ENCODE measurements at regions of chr6 and their contacts with region 1.

Region 1: DNA sequence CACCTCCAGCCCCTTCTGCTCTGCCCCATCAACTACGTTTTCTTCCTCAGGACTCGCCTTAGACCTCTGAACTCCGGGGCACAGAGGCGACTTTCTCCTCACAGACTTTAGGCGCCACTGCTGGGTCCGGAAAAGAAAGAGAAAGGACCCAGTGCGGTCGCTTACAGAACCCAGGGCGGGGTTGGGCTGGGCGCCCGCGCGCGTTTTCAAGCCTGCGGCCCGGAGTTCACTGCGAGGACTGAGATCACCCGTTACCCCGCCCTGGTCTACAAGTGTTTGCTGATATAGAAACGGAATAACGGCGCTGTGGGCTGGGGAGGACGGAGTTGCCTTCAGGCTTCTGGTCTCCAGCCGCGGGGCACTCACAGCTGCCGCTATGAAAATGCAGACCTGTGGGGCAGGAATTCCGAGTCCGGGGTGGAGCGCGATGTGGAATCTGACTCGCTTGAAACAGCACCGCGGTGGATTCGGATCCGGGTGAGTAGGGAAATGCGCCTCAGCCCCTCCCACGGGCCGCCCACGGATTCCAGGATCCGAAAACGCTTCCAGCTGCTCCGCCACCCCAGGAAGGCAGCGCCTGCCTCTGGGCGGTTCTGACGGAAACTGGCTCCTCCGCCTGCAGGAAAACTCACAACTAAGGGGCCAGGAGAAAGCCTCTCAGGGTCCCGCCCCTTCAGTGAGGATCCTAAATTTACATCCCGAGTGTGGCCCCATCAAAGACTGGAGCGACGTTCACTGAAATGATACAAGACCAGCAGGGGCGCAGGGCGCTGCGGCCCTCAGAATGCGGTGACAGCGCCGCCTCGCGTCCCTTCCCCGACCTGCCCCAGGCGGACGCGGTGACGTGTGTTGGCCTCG is 29.4 kb downstream of the HLA-F start:
- DNase-seq: peak; percentile 79
- H3K4me3 Mint-ChIP-seq: peak overlapping the region; percentile 93
- H3K27ac Mint-ChIP-seq: peak overlapping the region; percentile 91
- H3K4me1 Mint-ChIP-seq: peaks cover 65% of the 10 kb centered on the region
- H3K27me3 Mint-ChIP-seq: no peaks in the 10 kb centered on the region

Region 2: GRCh38 chr6:29524444-29525310 is 228.0 kb before region 1 on chr6:
- intact Hi-C with region 1: no loop called
- DNase-seq: no peak
- H3K4me3 Mint-ChIP-seq: no peak overlapping the region
- H3K27ac Mint-ChIP-seq: no peak overlapping the region
- H3K4me1 Mint-ChIP-seq: no peaks in the 10 kb centered on the region
- H3K27me3 Mint-ChIP-seq: peaks cover 17% of the 10 kb centered on the region

Region 3: DNA sequence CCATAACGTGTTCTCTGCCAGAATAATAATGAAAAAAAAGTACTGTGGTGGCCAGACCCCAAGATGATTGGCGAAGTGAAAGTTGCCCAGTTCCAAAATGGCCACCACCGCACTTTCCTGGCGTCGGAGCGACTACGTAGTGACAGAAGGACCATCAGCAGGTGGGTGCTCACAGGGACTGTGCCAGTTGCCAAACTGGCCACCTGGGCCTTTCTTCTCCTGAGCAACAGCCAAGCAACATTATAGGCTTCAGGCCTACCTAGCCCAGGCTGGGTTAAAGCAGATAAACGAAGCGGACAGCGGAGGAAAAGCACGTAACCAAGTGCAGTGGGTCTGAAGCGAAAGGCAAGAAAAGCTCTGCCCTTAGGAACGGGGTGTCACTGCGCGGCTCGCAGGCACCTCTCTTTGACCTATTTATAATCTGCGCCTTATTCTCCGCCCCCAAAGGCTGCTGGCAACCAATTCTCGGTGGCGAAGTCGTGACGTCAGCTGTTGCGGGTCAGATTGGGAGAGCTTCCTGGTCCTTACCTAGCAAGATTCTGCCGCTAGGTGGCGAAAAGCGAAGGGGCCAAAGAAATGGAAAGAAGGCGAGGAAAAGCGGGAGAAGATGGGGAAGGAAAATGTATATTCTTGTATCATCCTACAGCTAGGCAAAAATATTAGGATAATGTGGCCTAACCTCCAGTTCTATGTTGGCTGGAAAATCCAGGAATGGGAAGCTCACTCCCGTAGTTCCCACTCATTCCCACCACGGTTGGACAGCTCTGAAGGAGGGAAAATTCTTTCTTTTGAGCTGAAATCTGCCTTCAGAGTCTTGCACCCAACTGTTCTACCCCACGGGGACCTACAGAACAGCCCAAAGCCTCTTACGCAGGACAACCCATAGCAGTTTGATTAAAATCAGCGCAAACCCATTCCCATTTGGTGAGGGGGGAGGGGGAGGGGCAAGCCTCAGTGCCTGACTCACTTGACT is 102.7 kb before region 1 on chr6:
- intact Hi-C with region 1: loop called (anchors 1 kb)
- DNase-seq: peak; percentile 95
- H3K4me3 Mint-ChIP-seq: peak overlapping the region; percentile 89
- H3K27ac Mint-ChIP-seq: peak overlapping the region; percentile 98
- H3K4me1 Mint-ChIP-seq: peaks cover 20% of the 10 kb centered on the region
- H3K27me3 Mint-ChIP-seq: peaks cover 5% of the 10 kb centered on the region

Region 4: GRCh38 chr6:29737707-29738630 is 14.7 kb before region 1 on chr6:
- intact Hi-C with region 1: loop called (anchors 1 kb)
- DNase-seq: peak; percentile 63
- H3K4me3 Mint-ChIP-seq: no peak overlapping the region
- H3K27ac Mint-ChIP-seq: no peak overlapping the region
- H3K4me1 Mint-ChIP-seq: peaks cover 12% of the 10 kb centered on the region
- H3K27me3 Mint-ChIP-seq: no peaks in the 10 kb centered on the region

Region 5: GRCh38 chr6:29792123-29793035 is 39.7 kb after region 1 on chr6:
- intact Hi-C with region 1: loop called (anchors 2 kb)
- DNase-seq: peak; percentile 69
- H3K4me3 Mint-ChIP-seq: peak overlapping the region; percentile 86
- H3K27ac Mint-ChIP-seq: peak overlapping the region; percentile 64
- H3K4me1 Mint-ChIP-seq: peaks cover 13% of the 10 kb centered on the region
- H3K27me3 Mint-ChIP-seq: peaks cover 49% of the 10 kb centered on the region

Region 6: DNA sequence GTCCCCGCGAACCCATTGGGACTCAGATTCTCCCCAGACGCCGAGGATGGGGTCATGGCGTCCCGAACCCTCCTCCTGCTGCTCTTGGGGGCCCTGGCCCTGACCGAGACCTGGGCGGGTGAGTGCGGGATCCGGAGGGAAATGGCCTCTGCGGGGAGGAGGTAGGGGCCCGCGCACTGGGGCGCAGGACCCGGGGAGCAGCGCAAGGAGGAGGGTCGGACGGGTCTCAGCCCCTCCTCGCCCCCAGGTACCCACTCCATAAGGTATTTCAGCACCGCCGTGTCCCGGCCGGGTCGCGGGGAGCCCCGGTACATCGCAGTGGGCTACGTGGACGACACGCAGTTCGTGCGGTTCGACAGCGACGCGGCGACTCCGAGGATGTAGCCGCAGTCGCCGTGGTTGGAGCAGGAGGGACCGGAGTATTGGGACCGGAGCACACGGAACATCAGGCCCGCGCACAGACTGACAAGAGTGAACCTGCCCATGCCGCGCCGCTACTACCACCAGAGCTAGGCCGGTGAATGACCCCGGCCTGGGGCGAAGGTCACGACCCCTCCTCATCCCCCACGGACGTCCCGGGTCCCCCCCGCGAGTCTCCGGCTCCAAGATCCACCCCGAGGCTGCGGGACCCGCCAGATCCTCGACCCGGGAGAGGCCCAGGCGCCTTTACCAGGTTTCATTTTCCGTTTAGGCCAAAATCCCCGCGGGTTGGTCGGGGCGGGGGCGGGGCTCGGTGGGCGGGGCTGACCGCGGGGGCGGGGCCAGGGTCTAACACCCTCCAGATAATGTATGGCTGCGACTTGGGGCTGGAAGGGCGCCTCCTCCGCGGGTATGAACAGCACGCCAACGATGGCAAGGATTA is 174.0 kb after region 1 on chr6:
- intact Hi-C with region 1: loop called (anchors 1 kb)
- DNase-seq: peak; percentile 79
- H3K4me3 Mint-ChIP-seq: peak overlapping the region; percentile 92
- H3K27ac Mint-ChIP-seq: peak overlapping the region; percentile 98
- H3K4me1 Mint-ChIP-seq: peaks cover 51% of the 10 kb centered on the region
- H3K27me3 Mint-ChIP-seq: peaks cover 4% of the 10 kb centered on the region

Measured in activated T-helper 1 cell treated with anti-CD3 and anti-CD28 coated beads, Interleukin-12 subunit alpha, Interleukin-12 subunit beta, Interleukin-2, Interleukin-4 antibody, amounts not matched to agents 30 ng/mL and 10 ng/mL and 1 ng/mL, durations not matched to agents 14 hours and 24 hours and 36 hours (primary cell).